ENCODE measurements at regions of chr2 and their contacts with region 1.

Region 1: DNA sequence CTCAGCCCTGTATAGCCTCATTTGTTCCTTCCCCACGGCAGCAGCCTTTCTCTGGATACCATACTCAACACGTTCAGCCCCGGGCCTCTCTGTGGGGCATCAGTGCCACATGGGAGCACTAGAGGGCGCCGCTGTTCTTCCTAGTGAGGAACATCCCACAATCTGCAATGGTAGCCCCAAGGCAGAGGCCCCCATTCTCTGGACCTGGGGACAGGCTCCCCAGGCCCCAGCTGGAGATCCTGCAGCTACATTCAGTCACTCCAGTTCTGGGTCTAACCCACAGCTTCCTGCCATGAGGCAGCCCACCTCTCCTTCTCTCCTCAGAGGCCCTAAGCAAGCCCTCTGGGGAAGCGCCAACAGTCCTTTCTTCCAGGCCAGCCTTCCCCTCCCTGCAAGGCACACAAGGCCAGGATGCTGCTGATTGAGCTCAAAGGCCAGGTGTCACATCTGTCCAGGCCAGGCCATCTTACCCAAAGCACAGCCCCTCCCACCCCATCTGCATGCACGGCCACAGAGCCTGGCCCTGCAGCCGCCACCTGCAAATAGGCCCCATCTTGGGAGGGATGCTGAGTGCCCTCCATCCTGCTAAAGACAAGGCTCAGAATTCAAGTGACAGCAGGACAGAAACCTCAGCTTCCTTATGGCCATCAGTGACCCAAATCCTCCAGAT is 14.3 kb upstream of the SFXN5 start:
- DNase-seq: peak; percentile 82
- H3K4me3 ChIP-seq: no peak overlapping the region
- H3K27ac ChIP-seq: no peak overlapping the region
- H3K4me1 ChIP-seq: no peaks in the 10 kb centered on the region
- H3K27me3 ChIP-seq: no peaks in the 10 kb centered on the region
- CTCF ChIP-seq: peak; percentile 96

Region 2: GRCh38 chr2:73156539-73157124 is 70.8 kb after region 1 on chr2:
- CTCF ChIA-PET with region 1: interaction called, 16 read pairs
- POLR2A ChIA-PET with region 1: no interaction called
- intact Hi-C with region 1: loop called (anchors 1 kb)
- DNase-seq: peak; percentile 69
- H3K4me3 ChIP-seq: no peak overlapping the region
- H3K27ac ChIP-seq: no peak overlapping the region
- H3K4me1 ChIP-seq: peaks cover 2% of the 10 kb centered on the region
- H3K27me3 ChIP-seq: no peaks in the 10 kb centered on the region
- CTCF ChIP-seq: peak; percentile 93

Region 3: DNA sequence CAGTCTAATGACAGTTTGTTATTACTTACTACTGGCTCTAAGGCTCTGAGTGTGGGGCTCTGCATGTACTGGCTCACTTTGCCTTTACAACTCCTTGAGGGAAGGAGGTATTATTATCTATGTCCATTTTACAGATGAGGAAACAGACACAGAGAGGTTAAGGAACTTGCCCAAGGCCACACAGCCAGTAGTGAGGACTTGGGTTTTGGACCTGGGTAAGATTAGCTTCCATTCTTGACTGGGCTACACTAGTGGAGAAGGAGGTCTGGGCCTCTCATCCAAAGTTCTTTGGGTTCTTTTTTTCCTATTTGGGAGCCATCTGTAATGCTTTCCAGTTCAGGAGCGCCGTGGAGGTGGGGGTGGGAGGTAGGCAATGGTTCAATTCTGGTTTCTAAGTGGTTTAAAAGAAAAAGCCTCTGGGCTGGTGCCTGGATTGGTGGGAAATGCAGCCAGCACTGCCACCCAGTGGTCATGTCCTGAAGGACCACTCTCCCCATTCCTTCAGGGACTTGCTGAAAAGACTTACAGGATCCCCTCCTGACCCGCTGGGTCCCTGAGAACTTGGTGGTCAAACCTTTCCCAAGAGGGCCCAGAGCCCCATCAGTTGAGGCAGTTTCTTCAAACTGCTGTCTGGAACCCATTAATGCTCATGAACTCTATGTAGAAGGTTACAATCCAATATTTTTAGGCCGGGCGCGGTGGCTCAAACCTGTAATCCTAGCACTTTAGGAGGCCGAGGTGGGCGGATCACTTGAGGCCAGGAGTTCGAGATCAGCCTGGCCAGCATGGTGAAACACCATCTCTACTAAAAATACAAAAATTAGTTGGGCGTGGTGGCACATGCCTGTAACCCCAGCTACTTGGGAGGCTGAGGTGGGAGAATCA is 77.9 kb after region 1 on chr2:
- CTCF ChIA-PET with region 1: interaction called, 5 read pairs
- POLR2A ChIA-PET with region 1: no interaction called
- intact Hi-C with region 1: loop called (anchors 1 kb)
- DNase-seq: peak; percentile 79
- H3K4me3 ChIP-seq: no peak overlapping the region
- H3K27ac ChIP-seq: no peak overlapping the region
- H3K4me1 ChIP-seq: no peaks in the 10 kb centered on the region
- H3K27me3 ChIP-seq: no peaks in the 10 kb centered on the region
- CTCF ChIP-seq: peak; percentile 88

Region 4: GRCh38 chr2:73176881-73177644 is 91.2 kb after region 1 on chr2:
- CTCF ChIA-PET with region 1: interaction called, 4 read pairs
- POLR2A ChIA-PET with region 1: no interaction called
- intact Hi-C with region 1: loop called (anchors 5 kb)
- DNase-seq: peak; percentile 95
- H3K4me3 ChIP-seq: peak overlapping the region; percentile 36
- H3K27ac ChIP-seq: no peak overlapping the region
- H3K4me1 ChIP-seq: peaks cover 18% of the 10 kb centered on the region
- H3K27me3 ChIP-seq: no peaks in the 10 kb centered on the region
- CTCF ChIP-seq: peak; percentile 99

Region 5: DNA sequence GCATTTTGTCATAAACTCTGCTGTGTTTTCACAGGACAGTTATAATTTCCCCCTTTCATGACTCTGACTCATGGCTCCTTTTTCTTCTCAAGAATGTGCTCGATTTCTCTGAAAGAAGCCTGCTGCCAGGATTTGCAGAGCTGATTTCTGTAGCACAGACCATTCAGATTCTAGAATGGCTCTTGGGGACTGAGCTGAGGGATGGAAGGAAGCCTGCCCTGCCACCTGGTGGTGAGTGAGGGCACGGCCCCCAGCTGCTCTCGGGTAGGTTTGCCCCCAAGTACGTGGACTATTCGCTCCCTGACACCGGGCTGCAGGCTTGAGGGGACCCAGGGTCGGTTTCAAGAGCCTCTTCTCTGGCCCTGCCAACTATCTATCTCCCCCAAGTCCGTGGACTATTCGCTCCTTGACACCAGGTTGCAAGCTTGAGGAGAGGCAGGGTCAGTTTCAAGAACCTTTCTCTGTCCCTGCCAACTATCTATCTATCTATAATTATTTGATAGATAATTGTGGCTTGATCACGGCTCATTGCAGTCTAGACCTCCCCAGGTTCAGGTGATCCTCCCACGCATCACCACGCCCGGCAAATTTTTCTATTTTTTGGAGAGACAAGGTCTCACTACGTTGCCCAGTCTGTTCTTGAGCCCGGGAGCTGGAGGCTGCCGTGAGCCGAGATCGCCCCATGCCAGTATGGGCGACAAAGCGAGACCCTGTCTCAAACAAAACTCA is 126.8 kb after region 1 on chr2:
- CTCF ChIA-PET with region 1: no interaction called
- POLR2A ChIA-PET with region 1: no interaction called
- intact Hi-C with region 1: loop called (anchors 2 kb)
- DNase-seq: peak; percentile 85
- H3K4me3 ChIP-seq: no peak overlapping the region
- H3K27ac ChIP-seq: peak overlapping the region; percentile 1
- H3K4me1 ChIP-seq: peaks cover 6% of the 10 kb centered on the region
- H3K27me3 ChIP-seq: no peaks in the 10 kb centered on the region
- CTCF ChIP-seq: peak; percentile 96

Measured in A673 (cell line).